Common myeloid progenitor, CD34-positive (primary cell): ENCODE measurements at regions of chr12 and their contacts with region 1.

Region 1: DNA sequence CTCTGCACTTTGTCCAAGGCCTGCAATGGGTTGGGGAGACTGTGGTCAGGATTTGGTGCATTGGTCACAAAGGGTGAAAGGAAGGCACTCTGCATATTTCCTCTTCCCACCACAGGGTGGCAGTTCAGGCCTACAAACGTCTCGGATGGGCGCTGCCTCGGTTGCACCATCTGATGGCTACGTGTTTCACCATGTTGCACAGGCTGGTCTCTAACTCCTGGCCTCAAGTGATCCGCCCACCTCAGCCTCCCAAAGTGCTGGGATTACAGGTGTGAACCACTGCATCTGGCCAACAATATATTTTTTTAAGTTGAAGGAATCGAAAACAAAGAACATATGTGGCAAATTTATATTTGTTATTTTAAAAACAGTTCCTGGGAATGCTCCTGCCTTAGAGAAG is 35.1 kb downstream of the TMBIM6 start:
- DNase-seq: peak; percentile 39 to 63 (median 60)
- H3K4me3 ChIP-seq: no peak overlapping the region
- H3K27ac ChIP-seq: no peak overlapping the region
- H3K4me1 ChIP-seq: peaks cover 0 to 5% (median 0%) of the 10 kb centered on the region in 4 experiments
- H3K27me3 ChIP-seq: no peaks in the 10 kb centered on the region

Region 2: DNA sequence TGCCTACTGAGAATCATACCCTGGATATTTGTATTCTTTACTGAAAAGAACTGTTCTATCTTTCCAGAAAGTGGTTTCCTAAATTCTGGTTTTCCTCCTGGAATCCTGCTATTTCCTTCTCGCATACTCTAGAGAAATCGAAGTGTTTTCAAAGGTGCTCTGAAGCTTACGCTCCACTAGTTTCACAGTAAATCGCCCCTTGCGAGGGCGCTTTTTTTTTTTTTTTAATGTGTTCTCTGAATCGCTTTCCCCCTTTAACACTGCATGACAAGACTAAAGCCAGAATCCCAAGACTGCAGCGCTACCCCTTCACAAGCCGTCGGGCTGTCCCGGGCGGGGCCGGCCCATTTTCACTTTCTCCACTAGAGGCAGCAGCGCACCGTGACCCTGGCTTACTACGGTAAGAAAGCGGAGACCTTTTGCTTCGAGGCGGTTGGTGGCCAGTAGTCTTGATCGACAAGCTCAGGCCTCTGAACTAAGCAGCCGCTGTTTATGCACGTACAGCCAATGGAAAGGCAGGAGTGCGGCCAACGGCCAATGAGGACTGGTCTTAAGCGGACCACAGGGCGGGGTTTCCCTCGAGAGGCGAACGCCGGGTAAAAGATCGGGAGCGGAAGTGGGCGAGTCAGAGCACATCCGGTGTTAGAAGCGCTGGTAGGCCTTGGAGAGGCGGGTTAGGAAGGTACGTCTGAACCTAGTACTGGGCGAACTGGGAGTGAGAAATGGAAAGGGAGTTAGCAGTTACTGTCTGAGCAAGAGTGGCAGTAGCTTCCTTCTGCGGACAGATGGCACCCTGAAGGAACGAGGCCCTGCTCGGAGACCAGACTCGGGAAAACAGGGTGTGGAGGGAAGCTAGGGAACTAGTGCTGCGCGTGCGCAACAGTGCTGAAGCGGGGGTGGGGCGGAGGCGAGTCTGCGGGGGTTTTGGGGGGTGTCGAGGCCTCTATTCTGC is 35.2 kb before region 1 on chr12 and contains the start of gene TMBIM6:
- CTCF ChIA-PET with region 1: interaction called, 12 read pairs
- POLR2A ChIA-PET with region 1: interaction called, 3 read pairs
- DNase-seq: peak; percentile 100
- H3K4me3 ChIP-seq: peak within 1 kb of the TSS; percentile 62 to 94 (median 81)
- H3K27ac ChIP-seq: peak within 1 kb of the TSS; percentile 96 to 99
- H3K4me1 ChIP-seq: peaks cover 12 to 34% (median 21%) of the 10 kb centered on the region in 4 experiments
- H3K27me3 ChIP-seq: no peaks in the 10 kb centered on the region

Region 3: GRCh38 chr12:49800421-49801140 is 24.2 kb after region 1 on chr12:
- CTCF ChIA-PET with region 1: interaction called, 19 read pairs
- POLR2A ChIA-PET with region 1: no interaction called
- DNase-seq: no peak
- H3K4me3 ChIP-seq: no peak overlapping the region
- H3K27ac ChIP-seq: no peak overlapping the region
- H3K4me1 ChIP-seq: no peaks in the 10 kb centered on the region
- H3K27me3 ChIP-seq: no peaks in the 10 kb centered on the region

Region 4: DNA sequence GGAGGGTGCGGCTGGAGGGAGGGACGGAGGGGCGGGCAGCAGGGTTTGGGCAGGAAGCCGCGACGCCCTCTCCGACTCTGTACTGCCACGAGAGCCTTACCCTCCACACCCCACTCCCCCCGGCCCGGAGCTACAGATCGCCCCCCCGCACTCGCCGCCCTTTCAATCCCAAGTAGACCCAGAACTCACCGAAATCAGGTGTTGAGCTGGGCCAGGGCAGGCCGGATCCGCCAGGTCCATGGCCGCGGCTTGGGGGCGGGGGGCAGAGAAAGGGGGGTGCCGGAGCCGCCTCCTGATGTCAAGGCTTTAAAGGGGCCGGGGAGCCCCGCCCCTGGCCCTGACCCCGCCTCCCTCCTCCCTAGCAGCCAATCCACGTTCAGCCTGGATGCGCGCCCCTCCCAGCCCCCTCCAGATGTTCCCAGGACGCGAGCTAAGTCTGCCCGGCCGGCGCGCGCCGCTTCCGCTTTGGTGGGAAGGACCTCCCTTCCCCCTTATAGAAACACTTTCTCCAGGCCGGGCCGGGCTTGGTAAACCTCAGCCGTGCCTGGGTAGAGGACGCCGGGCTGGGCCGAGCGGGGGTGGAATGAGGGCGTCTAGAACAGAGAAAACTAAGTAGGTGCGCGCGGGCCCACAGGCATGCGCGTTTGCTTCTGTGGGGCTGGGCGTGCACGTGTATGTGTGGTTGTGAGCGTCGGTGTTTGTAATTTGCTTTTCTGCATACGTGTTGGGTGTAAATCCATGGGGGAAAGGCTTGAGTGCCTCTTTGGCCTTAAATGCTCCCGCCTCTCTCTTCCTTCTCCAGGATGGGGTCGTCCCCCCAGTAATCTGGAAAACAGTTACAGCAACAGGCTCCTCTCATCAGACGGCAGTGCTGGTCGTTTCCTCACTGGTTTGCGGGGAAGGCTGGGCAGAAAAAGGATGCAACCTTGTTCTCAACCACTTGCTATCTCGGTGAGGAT is 52.0 kb after region 1 on chr12 and contains the start of gene NCKAP5L:
- CTCF ChIA-PET with region 1: interaction called, 18 read pairs
- POLR2A ChIA-PET with region 1: no interaction called
- DNase-seq: peak; percentile 97 to 99 (median 99)
- H3K4me3 ChIP-seq: peak within 1 kb of the TSS; percentile 39 to 87 (median 76)
- H3K27ac ChIP-seq: peak within 1 kb of the TSS in 1 of 2 experiments; percentile 75
- H3K4me1 ChIP-seq: peaks cover 11 to 49% (median 37%) of the 10 kb centered on the region in 4 experiments
- H3K27me3 ChIP-seq: no peaks in the 10 kb centered on the region